BJ (cell line): ENCODE measurements at regions of chr11 and their contacts with region 1.

Region 1: DNA sequence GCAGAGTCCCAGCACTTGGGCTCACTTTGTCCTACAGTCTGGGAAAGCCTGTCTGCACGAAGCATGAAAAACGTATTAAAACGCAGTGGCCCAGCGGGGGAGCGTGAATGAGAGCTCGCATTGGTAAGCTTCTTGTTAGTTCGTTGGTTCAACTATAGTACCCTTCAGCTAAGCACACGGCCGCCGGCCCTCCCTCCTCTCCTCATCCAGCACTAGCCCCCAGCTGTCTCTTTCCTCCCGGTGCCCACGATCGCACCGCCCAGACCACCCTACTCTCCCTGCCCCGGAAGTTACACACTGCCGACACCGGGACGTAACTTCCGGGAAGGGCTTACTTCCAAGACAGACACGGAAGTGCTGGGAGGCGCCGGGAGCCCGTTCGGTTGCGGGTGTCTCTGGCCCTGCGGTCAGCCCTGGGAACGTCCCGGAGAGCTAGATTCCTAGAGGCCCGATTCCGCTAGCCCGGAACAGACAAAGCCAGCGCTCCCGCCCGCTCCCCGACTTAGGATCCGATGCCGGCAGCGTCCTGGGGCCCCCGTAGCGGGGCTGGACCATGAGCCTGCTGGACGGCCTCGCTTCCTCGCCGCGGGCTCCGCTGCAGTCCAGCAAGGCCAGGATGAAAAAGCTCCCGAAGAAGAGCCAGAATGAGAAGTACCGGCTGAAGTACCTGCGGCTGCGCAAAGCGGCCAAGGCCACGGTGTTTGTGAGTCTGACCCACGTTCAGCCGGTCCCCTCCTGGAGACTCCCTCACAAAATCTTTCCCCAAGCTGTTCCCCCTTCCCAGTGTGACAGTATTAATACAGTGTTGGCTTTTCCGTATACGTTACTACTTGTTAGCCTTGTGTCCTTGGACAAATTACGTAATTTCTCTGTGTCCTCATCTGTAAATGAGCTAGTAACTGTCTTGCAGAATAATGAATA is at the start of gene TBRG1:
- DNase-seq: peak; percentile 58
- H3K4me3 ChIP-seq: peak within 1 kb of the TSS; percentile 92
- H3K27me3 ChIP-seq: peaks cover 5% of the 10 kb centered on the region; the same call in 1 of the 2 replicates
- CTCF ChIP-seq: no peak
- polyA plus RNA-seq, gene TBRG1: 40.8 and 42.5 TPM in 2 replicates

Region 2: GRCh38 chr11:124633355-124633754 is 10.6 kb after region 1 on chr11:
- CTCF ChIA-PET with region 1: interaction called, 10 read pairs
- POLR2A ChIA-PET with region 1: no interaction called
- DNase-seq: no peak
- H3K4me3 ChIP-seq: no peak overlapping the region
- H3K27me3 ChIP-seq: no peaks in the 10 kb centered on the region
- CTCF ChIP-seq: peak; percentile 43